ENCODE measurements at regions of chr21 and their contacts with region 1.

Region 1: DNA sequence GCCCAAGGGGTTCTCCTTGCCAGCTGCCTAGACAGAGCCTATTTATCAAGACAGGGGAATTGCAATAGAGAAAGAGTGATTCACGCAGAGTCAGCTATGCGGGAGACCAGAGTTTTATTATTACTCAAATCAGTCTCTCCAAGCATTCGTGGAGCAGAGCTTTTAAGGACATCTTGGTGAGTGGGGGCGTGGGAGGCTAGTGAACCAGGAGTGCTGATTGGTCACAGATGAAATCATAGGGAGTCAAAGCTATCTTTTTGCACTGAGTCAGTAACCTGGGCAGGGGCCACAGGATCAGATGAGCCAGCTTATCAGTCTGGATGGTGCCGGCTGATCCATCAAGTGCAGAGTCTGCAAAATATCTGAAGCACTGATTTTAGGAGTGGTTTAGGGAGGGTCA is 64.8 kb upstream of the MRPS6 start:
- DNase-seq: no peak
- H3K4me3 Mint-ChIP-seq: no peak overlapping the region
- H3K27ac Mint-ChIP-seq: peak overlapping the region; percentile 60
- H3K4me1 Mint-ChIP-seq: peaks cover 18% of the 10 kb centered on the region
- H3K27me3 Mint-ChIP-seq: no peaks in the 10 kb centered on the region

Region 2: GRCh38 chr21:33036430-33037162 is 972.0 kb before region 1 on chr21:
- intact Hi-C with region 1: no loop called
- DNase-seq: peak; percentile 26
- H3K4me3 Mint-ChIP-seq: no peak overlapping the region
- H3K27ac Mint-ChIP-seq: peak overlapping the region; percentile 70
- H3K4me1 Mint-ChIP-seq: peaks cover 16% of the 10 kb centered on the region
- H3K27me3 Mint-ChIP-seq: peaks cover 21% of the 10 kb centered on the region

Region 3: GRCh38 chr21:34022627-34023335 is 14.2 kb after region 1 on chr21:
- intact Hi-C with region 1: loop called (anchors 1 kb)
- DNase-seq: no peak
- H3K4me3 Mint-ChIP-seq: no peak overlapping the region
- H3K27ac Mint-ChIP-seq: no peak overlapping the region
- H3K4me1 Mint-ChIP-seq: peaks cover 25% of the 10 kb centered on the region
- H3K27me3 Mint-ChIP-seq: no peaks in the 10 kb centered on the region

Region 4: DNA sequence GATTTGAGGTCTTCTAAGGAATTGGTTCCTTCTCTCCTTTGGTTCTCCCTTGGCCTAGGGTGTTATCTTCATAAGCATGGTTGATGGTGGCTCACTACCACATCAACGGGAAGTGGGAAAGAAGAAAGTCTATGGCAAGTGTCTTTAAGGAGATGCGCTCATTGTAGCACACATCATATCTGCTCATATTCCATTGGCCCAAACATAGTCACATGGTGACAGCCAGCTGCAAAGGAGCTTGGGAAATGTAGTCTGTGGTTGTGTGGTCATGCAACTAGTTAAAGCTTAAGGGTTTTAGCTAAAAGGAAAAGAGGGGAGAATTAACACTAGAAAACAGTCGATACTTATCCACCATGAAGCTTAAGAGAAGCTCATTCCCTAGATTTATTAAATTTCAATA is 53.4 kb after region 1 on chr21:
- intact Hi-C with region 1: no loop called
- DNase-seq: no peak
- H3K4me3 Mint-ChIP-seq: no peak overlapping the region
- H3K27ac Mint-ChIP-seq: no peak overlapping the region
- H3K4me1 Mint-ChIP-seq: peaks cover 2% of the 10 kb centered on the region
- H3K27me3 Mint-ChIP-seq: peaks cover 5% of the 10 kb centered on the region

Measured in activated T-helper 2 cell treated with anti-CD3 and anti-CD28 coated beads, Interferon-gamma antibody, Interleukin-2, Interleukin-4, amounts not matched to agents 10 μg/mL and 5 μg/mL and 100 μg/mL, durations not matched to agents 14 hours and 24 hours and 36 hours (primary cell).